ENCODE measurements at regions of chr18 and their contacts with region 1.

Region 1: DNA sequence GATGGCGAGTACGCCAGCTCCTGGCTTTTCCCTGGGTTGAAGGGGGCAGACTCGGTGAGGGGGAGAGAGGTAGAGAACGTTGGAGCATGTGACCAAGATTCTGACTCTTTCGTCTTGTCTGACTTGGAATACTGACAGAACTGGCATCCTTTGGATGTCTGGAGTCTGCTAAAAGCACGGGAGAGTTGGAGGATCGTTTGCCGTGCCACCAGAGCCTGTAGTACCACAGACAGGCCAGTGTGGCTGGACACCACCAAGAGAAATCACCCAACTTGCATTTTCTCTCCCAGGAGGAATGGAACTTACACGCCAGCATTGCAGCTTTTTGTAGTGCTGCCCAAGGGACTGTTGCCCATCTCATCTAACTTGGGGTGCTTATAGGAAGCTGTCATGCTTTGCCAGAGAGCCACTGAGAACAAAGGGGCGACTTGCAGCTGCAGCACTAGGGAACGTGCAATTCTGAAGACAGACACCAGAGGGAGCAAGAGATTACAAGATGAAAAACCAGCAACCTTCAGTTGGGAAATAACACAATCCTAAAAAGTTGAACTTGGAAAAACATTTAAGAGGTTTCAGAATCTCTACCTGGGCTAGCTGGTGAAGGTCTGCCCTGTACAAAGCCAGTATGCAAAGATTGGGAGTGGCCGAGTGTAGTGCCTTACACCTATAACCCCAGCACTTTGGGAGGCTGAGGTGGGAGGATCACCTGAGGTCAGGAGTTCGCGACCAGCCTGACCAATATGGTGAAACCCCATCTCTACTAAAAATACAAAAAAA is 24.1 kb downstream of the PSMG2 start:
- DNase-seq: peak; percentile 70
- H3K4me3 ChIP-seq: no peak overlapping the region
- H3K27ac ChIP-seq: no peak overlapping the region
- H3K4me1 ChIP-seq: no peaks in the 10 kb centered on the region
- H3K27me3 ChIP-seq: no peaks in the 10 kb centered on the region

Region 2: GRCh38 chr18:12543697-12544096 is 183.3 kb before region 1 on chr18:
- in situ Hi-C with region 1: no loop called
- DNase-seq: no peak
- H3K4me3 ChIP-seq: no peak overlapping the region
- H3K27ac ChIP-seq: no peak overlapping the region
- H3K4me1 ChIP-seq: no peaks in the 10 kb centered on the region
- H3K27me3 ChIP-seq: no peaks in the 10 kb centered on the region

Region 3: GRCh38 chr18:12837747-12838146 is 110.8 kb after region 1 on chr18:
- in situ Hi-C with region 1: no loop called
- DNase-seq: peak; percentile 58
- H3K4me3 ChIP-seq: peak overlapping the region; percentile 51
- H3K27ac ChIP-seq: peak overlapping the region; percentile 86
- H3K4me1 ChIP-seq: peaks cover 38% of the 10 kb centered on the region
- H3K27me3 ChIP-seq: no peaks in the 10 kb centered on the region

Region 4: DNA sequence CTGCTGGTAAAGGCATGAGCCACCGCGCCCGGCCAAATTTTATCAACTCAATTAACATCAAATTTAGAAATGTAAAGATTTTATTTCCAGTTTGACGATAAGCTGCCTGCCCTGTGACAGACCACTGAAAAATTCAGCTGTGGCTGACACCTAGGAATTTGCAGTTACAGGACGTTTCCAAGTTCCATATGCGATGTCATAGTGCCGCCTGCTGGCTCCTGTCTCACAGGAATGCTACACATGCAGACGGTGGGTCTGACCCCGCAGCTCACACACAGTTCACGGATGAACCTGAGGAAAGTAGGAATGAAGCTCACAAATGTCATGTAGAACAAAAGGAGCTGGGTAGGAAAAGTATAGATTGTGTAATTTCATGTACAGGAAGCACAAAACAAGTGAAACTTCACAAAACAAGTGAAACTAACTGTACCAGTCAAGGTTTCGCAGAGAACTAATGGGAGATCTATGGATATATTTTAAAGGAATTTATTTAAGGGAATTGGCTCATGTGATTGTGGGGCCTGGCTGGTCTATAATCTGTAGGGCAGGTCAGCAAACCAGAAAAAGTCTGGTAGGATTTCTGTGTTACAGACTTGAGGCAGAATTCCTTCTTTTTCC is 207.6 kb after region 1 on chr18:
- in situ Hi-C with region 1: loop called (anchors 5 kb)
- DNase-seq: peak; percentile 90
- H3K4me3 ChIP-seq: peak overlapping the region; percentile 41; the same call in 1 of the 2 replicates
- H3K27ac ChIP-seq: no peak overlapping the region
- H3K4me1 ChIP-seq: peaks cover 4% of the 10 kb centered on the region; the same call in 1 of the 2 replicates
- H3K27me3 ChIP-seq: no peaks in the 10 kb centered on the region

Region 5: DNA sequence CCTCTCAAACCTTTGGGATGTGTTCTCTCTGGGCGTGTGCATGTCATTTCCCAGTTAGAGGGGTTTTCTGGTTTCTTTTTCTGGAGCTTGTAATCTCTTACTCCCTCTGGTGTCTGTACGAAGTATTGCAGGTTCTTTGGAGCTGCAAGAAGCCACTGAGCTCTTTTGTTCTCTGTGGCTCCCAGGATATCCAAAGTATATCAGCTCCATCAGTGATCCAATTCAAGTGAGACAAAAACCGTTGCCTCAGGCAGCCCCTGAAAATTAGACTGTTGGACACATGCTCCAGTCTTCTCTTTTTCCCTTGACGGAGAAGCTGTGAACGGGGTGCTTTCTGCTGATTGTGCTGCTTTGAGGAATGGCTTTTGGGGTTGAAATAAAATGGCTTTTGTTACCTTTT is 432.6 kb after region 1 on chr18:
- in situ Hi-C with region 1: loop called (anchors 25 kb)
- DNase-seq: peak; percentile 70
- H3K4me3 ChIP-seq: peak overlapping the region; percentile 42
- H3K27ac ChIP-seq: no peak overlapping the region
- H3K4me1 ChIP-seq: peaks cover 8% of the 10 kb centered on the region; the same call in 1 of the 2 replicates
- H3K27me3 ChIP-seq: no peaks in the 10 kb centered on the region

Region 6: DNA sequence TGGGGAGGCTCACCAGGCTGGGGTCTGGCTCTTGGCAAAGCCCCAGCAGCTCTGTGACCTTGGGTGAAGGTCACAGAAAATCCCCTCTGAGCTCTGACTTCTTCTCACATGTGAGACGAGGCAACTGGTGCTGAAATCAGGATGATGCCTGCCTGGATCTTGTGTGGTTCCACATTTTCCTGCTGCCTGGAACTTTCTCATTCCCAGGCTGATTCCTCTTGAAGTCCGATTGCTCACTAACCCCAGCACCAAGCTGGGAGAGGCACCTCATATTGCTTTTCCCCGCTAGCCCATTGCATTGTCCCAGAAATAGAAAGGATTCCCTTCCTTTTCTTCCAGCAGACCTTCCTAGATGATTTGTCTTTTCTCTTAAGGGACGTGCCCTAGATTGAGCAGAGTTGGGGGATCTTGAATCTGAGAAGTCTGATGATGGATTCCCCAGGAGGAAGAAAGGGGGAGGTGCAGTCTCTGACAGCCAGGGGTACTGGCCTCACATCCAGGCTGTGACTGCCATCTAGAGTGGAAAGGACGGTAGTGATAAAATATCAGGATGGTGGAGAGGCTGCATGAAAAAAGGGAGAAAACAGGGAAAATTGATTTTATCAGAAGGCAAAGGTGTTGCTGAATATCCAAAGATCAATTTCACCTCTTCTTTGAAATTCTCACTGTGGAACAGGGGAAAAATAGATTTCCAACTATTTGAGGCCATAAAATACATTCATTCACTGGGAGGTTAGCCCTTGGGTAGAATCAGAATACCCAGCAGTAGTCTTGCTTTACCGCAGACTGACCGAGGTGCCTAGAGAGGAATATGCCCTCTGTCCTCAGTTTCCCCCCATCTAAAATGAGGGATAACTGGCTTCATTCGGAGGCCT is 903.1 kb after region 1 on chr18:
- in situ Hi-C with region 1: loop called (anchors 25 kb)
- DNase-seq: peak; percentile 75
- H3K4me3 ChIP-seq: no peak overlapping the region
- H3K27ac ChIP-seq: no peak overlapping the region
- H3K4me1 ChIP-seq: no peaks in the 10 kb centered on the region
- H3K27me3 ChIP-seq: peaks cover 19% of the 10 kb centered on the region

Measured in GM23248 (cell line).